Heart left ventricle (tissue), 16 donors: ENCODE measurements at regions of chr7 and their contacts with region 1.

Region 1: GRCh38 chr7:46616636-46617035 is 695.6 kb upstream of the IGFBP3 start:
- DNase-seq: no peak
- ATAC-seq: no peak
- H3K4me3 ChIP-seq: no peak overlapping the region
- H3K27ac ChIP-seq: no peak overlapping the region
- H3K4me1 ChIP-seq: peaks cover 0 to 15% (median 0%) of the 10 kb centered on the region in 12 donors
- H3K27me3 ChIP-seq: no peaks in the 10 kb centered on the region
- CTCF ChIP-seq: no peak
- POLR2A ChIP-seq: no peak

Region 2: GRCh38 chr7:46745707-46746090 is 129.1 kb after region 1 on chr7:
- intact Hi-C with region 1: loop called in 1 of 10 experiments (anchors 10 kb)
- DNase-seq: no peak
- ATAC-seq: peak in 3 of 4 donors; percentile 44 to 67 (median 48)
- H3K4me3 ChIP-seq: no peak overlapping the region
- H3K27ac ChIP-seq: no peak overlapping the region
- H3K4me1 ChIP-seq: peaks cover 0 to 6% (median 0%) of the 10 kb centered on the region in 12 donors
- H3K27me3 ChIP-seq: no peaks in the 10 kb centered on the region
- CTCF ChIP-seq: peak in 8 of 12 donors; percentile 6 to 37 (median 14)
- POLR2A ChIP-seq: no peak